CD4-positive, alpha-beta T cell (primary cell): ENCODE measurements at regions of chr1 and their contacts with region 1.

Region 1: DNA sequence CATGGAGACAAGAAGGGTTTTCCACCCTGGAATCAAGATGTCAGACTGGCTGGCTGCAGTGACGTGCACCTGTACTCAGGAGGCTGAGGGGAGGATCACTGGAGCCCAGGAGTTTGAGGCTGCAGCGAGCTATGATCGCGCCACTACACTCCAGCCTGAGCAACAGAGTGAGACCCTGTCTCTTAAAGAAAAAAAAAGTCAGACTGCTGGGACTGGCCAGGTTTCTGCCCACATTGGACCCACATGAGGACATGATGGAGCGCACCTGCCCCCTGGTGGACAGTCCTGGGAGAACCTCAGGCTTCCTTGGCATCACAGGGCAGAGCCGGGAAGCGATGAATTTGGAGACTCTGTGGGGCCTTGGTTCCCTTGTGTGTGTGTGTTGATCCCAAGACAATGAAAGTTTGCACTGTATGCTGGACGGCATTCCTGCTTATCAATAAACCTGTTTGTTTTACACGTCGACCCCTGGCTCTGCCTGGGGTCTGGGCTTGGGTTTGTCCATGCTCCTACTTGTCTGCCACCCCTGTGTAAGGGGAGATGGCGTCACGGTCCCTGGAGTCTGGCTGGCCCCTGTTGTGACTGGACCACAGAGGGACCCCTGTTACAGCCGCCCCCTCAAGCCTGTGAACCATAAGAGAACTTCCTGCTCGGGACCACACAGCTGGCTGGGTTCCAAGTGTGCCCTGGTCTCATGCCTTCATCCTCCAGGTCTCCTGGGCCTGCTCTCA is 20.9 kb upstream of the VPS13D start:
- DNase-seq: peak; percentile 75 to 93 (median 85)
- ATAC-seq: peak; percentile 73
- H3K4me3 ChIP-seq: no peak overlapping the region
- H3K4me3 Mint-ChIP-seq: peak overlapping the region; percentile 21
- H3K27ac ChIP-seq: peak overlapping the region; percentile 29 to 49
- H3K27ac Mint-ChIP-seq: peak overlapping the region; percentile 83
- H3K4me1 ChIP-seq: peaks cover 55% of the 10 kb centered on the region
- H3K4me1 Mint-ChIP-seq: peaks cover 56% of the 10 kb centered on the region
- H3K27me3 ChIP-seq: no peaks in the 10 kb centered on the region
- H3K27me3 Mint-ChIP-seq: no peaks in the 10 kb centered on the region
- CTCF ChIP-seq: peak; percentile 96

Region 2: DNA sequence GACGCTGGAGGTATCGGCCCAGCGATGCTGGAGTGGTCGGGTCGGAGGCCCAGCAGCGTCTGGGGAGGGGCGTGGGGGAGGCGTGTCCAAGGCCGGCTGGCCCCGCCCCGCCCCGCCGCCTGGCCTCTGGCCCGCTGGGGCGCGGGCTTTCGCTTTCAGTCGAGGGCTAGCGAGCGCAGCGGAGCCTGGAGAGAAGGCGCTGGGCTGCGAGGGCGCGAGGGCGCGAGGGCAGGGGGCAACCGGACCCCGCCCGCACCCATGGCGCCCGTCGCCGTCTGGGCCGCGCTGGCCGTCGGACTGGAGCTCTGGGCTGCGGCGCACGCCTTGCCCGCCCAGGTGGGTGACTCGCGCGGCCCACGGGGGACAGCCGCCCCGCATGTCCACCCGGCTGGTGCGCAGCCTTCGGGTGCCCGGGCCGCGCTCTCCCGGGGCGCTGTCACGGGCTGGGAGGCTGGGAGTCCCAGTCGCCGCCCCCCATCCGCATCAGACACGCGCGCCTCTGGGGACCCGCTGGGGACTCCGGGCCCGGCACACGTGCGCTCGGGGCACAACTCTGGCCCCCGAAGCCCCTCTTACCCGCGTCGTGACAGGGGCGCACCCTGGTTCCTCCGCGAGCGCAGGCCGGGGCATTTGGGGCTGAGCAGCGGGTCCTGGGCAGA is 42.0 kb before region 1 on chr1 and contains the start of gene TNFRSF1B:
- CTCF ChIA-PET with region 1: interaction called, 3 read pairs
- POLR2A ChIA-PET with region 1: interaction called, 5 read pairs
- intact Hi-C with region 1: loop called (anchors 5 kb)
- DNase-seq: peak in 13 of 14 experiments; percentile 37 to 85 (median 60)
- ATAC-seq: peak; percentile 50
- H3K4me3 ChIP-seq: peak within 1 kb of the TSS; percentile 94
- H3K4me3 Mint-ChIP-seq: peak within 1 kb of the TSS; percentile 99
- H3K27ac ChIP-seq: peak within 1 kb of the TSS; percentile 82 to 83
- H3K27ac Mint-ChIP-seq: peak within 1 kb of the TSS; percentile 96
- H3K4me1 ChIP-seq: peaks cover 91% of the 10 kb centered on the region
- H3K4me1 Mint-ChIP-seq: peaks cover 66% of the 10 kb centered on the region
- H3K27me3 ChIP-seq: no peaks in the 10 kb centered on the region
- H3K27me3 Mint-ChIP-seq: no peaks in the 10 kb centered on the region
- CTCF ChIP-seq: no peak
- total RNA-seq, gene TNFRSF1B: 61.9 to 62.6 TPM

Region 3: GRCh38 chr1:12177999-12178441 is 30.9 kb before region 1 on chr1:
- CTCF ChIA-PET with region 1: interaction called, 17 read pairs
- POLR2A ChIA-PET with region 1: interaction called, 13 read pairs
- intact Hi-C with region 1: loop called (anchors 1 to 2 kb)
- DNase-seq: peak; percentile 77 to 99 (median 94)
- ATAC-seq: peak; percentile 70
- H3K4me3 ChIP-seq: peak overlapping the region; percentile 41
- H3K4me3 Mint-ChIP-seq: peak overlapping the region; percentile 69
- H3K27ac ChIP-seq: peak overlapping the region; percentile 83 to 85
- H3K27ac Mint-ChIP-seq: peak overlapping the region; percentile 96
- H3K4me1 ChIP-seq: peaks cover 100% of the 10 kb centered on the region
- H3K4me1 Mint-ChIP-seq: peaks cover 77% of the 10 kb centered on the region
- H3K27me3 ChIP-seq: no peaks in the 10 kb centered on the region
- H3K27me3 Mint-ChIP-seq: no peaks in the 10 kb centered on the region
- CTCF ChIP-seq: no peak

Region 4: GRCh38 chr1:12184008-12184681 is 24.8 kb before region 1 on chr1:
- CTCF ChIA-PET with region 1: interaction called, 17 read pairs
- POLR2A ChIA-PET with region 1: interaction called, 13 read pairs
- intact Hi-C with region 1: loop called in 1 of 2 experiments (anchors 2 kb)
- DNase-seq: peak in 2 of 14 experiments; percentile 59 to 68
- ATAC-seq: no peak
- H3K4me3 ChIP-seq: no peak overlapping the region
- H3K4me3 Mint-ChIP-seq: no peak overlapping the region
- H3K27ac ChIP-seq: peak overlapping the region; percentile 1 to 52
- H3K27ac Mint-ChIP-seq: peak overlapping the region; percentile 96
- H3K4me1 ChIP-seq: peaks cover 94% of the 10 kb centered on the region
- H3K4me1 Mint-ChIP-seq: peaks cover 50% of the 10 kb centered on the region
- H3K27me3 ChIP-seq: no peaks in the 10 kb centered on the region
- H3K27me3 Mint-ChIP-seq: no peaks in the 10 kb centered on the region
- CTCF ChIP-seq: no peak

Region 5: DNA sequence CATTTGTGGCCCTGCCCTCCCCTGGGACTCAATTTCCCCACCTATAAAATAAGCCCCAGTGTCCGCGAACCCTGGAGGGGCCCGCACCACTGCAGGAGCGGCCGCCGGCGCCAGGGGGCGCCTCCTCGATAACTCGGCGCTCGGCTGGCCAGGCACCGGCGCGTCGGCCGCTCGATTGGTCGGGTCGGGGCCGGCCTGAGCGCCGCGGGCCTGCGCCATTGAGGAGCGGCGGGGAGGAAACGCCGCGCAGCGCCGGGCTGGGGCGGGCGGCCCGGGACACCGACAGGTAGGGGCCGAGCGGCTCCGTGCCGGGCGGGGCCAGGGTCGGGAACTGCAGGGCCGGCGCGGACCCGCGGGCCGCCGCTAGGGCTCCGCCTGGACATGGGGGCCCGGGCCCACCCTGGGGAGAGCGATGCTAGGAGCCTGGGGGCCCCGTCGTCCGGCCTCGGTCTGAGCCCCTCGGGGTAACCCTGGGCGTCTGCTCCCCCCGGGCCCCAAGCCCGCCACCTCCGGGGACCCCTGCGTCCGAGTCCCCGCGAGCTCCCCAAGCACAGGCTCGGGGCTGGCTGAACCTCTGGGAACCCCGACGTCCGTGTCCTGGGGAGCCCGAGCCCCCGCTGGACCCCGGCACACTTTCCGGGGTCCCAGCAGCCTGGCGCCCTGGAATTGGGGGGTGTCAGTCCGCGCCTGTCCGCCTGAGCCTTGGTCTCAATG is 21.1 kb after region 1 on chr1 and contains the start of gene VPS13D:
- CTCF ChIA-PET with region 1: interaction called, 3 read pairs
- POLR2A ChIA-PET with region 1: interaction called, 13 read pairs
- intact Hi-C with region 1: loop called (anchors 1 to 2 kb)
- DNase-seq: peak; percentile 74 to 93 (median 82)
- ATAC-seq: peak; percentile 95
- H3K4me3 ChIP-seq: peak within 1 kb of the TSS; percentile 98
- H3K4me3 Mint-ChIP-seq: peak within 1 kb of the TSS; percentile 94
- H3K27ac ChIP-seq: peak within 1 kb of the TSS in 1 of 2 donors; percentile 50
- H3K27ac Mint-ChIP-seq: peak within 1 kb of the TSS; percentile 83
- H3K4me1 ChIP-seq: peaks cover 24% of the 10 kb centered on the region
- H3K4me1 Mint-ChIP-seq: peaks cover 27% of the 10 kb centered on the region
- H3K27me3 ChIP-seq: no peaks in the 10 kb centered on the region
- H3K27me3 Mint-ChIP-seq: no peaks in the 10 kb centered on the region
- CTCF ChIP-seq: peak; percentile 85
- total RNA-seq, gene VPS13D: 63.0 to 67.3 TPM

Region 6: GRCh38 chr1:12285496-12286143 is 76.7 kb after region 1 on chr1:
- CTCF ChIA-PET with region 1: no interaction called
- POLR2A ChIA-PET with region 1: no interaction called
- intact Hi-C with region 1: no loop called
- DNase-seq: no peak
- ATAC-seq: no peak
- H3K4me3 ChIP-seq: no peak overlapping the region
- H3K4me3 Mint-ChIP-seq: no peak overlapping the region
- H3K27ac ChIP-seq: no peak overlapping the region
- H3K27ac Mint-ChIP-seq: no peak overlapping the region
- H3K4me1 ChIP-seq: no peaks in the 10 kb centered on the region
- H3K4me1 Mint-ChIP-seq: peaks cover 14% of the 10 kb centered on the region
- H3K27me3 ChIP-seq: no peaks in the 10 kb centered on the region
- H3K27me3 Mint-ChIP-seq: no peaks in the 10 kb centered on the region
- CTCF ChIP-seq: no peak